CD4-positive, alpha-beta memory T cell (primary cell): ENCODE measurements at regions of chr7 and their contacts with region 1.

Region 1: GRCh38 chr7:99616359-99617191 is at the start of gene ZSCAN25:
- DNase-seq: peak; percentile 85 to 86 (median 86)
- H3K4me3 ChIP-seq: peak within 1 kb of the TSS; percentile 79
- H3K4me3 Mint-ChIP-seq: peak within 1 kb of the TSS; percentile 96 to 99 (median 98)
- H3K27ac ChIP-seq: peak within 1 kb of the TSS; percentile 96
- H3K27ac Mint-ChIP-seq: peak within 1 kb of the TSS; percentile 90 to 99 (median 96)
- H3K4me1 ChIP-seq: peaks cover 21% of the 10 kb centered on the region
- H3K4me1 Mint-ChIP-seq: peaks cover 18 to 53% (median 37%) of the 10 kb centered on the region in 4 donors
- H3K27me3 ChIP-seq: no peaks in the 10 kb centered on the region
- H3K27me3 Mint-ChIP-seq: no peaks in the 10 kb centered on the region
- total RNA-seq, gene ZSCAN25: 40.4 to 43.1 TPM

Region 2: DNA sequence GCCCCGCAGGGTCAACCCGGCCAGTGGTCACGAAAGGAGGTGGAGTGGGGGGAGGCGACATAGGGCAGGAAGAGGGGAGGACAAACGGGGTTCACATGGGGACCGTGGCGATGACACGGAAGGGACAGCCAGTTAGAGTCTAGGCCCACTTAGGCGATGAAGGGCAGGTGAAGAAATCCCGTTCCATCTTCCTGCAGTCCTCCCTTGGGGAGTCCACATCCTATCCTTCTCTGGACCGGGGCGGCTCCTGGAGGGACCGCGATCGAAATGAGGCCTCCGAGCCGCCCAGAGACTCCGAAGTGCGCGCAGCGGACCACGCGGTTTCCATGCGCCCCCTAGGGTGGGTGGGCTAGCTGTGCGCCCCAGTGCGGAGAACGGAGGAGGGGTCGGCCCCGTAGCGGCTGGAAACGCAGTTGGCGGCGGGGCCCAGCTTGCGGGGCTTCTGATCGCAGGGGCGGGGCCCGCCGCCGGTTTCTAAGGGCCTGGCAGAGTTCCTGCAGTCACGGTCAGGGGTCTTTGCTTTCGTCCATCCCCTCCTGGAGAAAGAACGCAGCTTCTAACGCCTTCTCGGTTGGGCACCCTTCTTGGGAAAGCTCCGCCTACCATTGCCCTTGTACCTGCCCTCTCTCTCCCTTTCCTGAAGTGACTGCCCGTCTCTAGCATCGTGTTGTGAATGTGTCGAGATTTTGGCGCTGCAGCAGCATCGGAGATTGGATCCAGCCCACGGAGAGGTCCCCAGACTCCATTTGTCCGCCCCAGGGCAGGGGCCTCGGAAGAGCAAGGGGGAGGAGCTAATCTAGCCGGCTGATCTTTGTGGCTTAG is 36.4 kb before region 1 on chr7:
- CTCF ChIA-PET with region 1: no interaction called
- POLR2A ChIA-PET with region 1: interaction called, 3 read pairs
- intact Hi-C with region 1: loop called (anchors 2 kb)
- DNase-seq: peak; percentile 38 to 59 (median 44)
- H3K4me3 ChIP-seq: peak overlapping the region; percentile 52 to 59
- H3K4me3 Mint-ChIP-seq: peak overlapping the region; percentile 85 to 96 (median 92)
- H3K27ac ChIP-seq: peak overlapping the region; percentile 23
- H3K27ac Mint-ChIP-seq: peak overlapping the region; percentile 2 to 95 (median 89)
- H3K4me1 ChIP-seq: peaks cover 10% of the 10 kb centered on the region
- H3K4me1 Mint-ChIP-seq: peaks cover 9 to 20% (median 13%) of the 10 kb centered on the region in 4 donors
- H3K27me3 ChIP-seq: no peaks in the 10 kb centered on the region
- H3K27me3 Mint-ChIP-seq: no peaks in the 10 kb centered on the region